ENCODE measurements at regions of chr12 and their contacts with region 1.

Region 1: DNA sequence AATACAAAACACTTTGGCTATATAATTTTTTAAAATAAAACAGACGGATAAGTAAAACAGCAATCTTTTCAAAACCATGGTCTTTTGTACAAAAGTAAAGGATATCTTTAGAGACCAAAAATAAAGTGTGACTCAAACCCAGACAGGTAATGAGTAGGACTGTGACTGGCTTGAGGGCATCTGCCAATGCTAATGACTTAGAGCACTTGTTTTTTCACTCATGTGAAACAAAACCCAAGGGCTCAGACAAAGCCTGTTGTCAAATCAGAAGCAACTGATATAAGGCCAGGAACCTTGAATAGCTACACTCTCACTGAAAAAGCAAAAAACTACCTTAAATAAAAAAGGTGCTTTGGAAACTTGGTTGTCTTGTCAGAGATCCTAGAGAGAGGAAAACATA is 357.4 kb downstream of the TMEM117 start:
- DNase-seq: no peak
- H3K4me3 ChIP-seq: no peak overlapping the region
- H3K27ac ChIP-seq: no peak overlapping the region
- H3K4me1 ChIP-seq: no peaks in the 10 kb centered on the region
- H3K27me3 ChIP-seq: no peaks in the 10 kb centered on the region
- CTCF ChIP-seq: no peak
- POLR2A ChIP-seq: no peak

Region 2: GRCh38 chr12:44076871-44077270 is 116.4 kb before region 1 on chr12:
- intact Hi-C with region 1: no loop called
- DNase-seq: no peak
- H3K4me3 ChIP-seq: no peak overlapping the region
- H3K27ac ChIP-seq: no peak overlapping the region
- H3K4me1 ChIP-seq: peaks cover 10% of the 10 kb centered on the region
- H3K27me3 ChIP-seq: no peaks in the 10 kb centered on the region
- CTCF ChIP-seq: no peak
- POLR2A ChIP-seq: no peak

Region 3: DNA sequence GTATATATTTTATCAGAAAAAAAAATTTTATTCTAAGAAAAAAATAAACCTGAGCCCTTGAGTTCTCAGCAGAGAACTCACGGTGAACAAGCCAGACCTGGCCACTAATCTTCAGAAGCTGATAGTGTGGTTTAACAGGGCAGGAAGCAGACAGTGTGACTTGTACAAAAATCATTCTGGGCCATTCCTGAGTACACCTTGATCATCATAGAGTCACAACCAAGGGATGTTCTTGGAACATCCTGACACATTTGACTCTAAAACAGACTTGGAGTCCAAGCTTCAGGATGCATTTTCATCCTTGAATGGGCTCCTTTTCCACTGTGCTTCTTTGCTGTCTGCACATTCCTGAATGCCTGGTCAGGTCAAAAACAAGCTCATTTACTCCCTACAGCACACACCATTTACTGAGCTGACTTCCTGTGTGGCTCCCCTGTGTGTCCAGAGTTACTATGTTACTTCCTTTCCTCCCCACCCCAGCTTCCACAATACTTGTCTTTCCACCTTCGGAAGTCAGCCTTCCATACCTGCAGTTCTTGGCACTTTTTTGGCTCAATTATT is 1134.6 kb after region 1 on chr12:
- intact Hi-C with region 1: loop called (anchors 5 kb)
- DNase-seq: no peak
- H3K4me3 ChIP-seq: no peak overlapping the region
- H3K27ac ChIP-seq: no peak overlapping the region
- H3K4me1 ChIP-seq: peaks cover 5% of the 10 kb centered on the region
- H3K27me3 ChIP-seq: no peaks in the 10 kb centered on the region
- CTCF ChIP-seq: no peak
- POLR2A ChIP-seq: no peak

Measured in vagina (tissue), 2 donors.